ENCODE measurements at regions of chr6 and their contacts with region 1.

Region 1: GRCh38 chr6:33744001-33744848 is 2.5 kb downstream of the IP6K3 start:
- DNase-seq: peak; percentile 81
- ATAC-seq: peak; percentile 81
- H3K4me3 ChIP-seq: no peak overlapping the region
- H3K4me3 Mint-ChIP-seq: no peak overlapping the region
- H3K27ac ChIP-seq: no peak overlapping the region
- H3K27ac Mint-ChIP-seq: peak overlapping the region; percentile 23
- H3K4me1 ChIP-seq: peaks cover 0 to 3% of the 10 kb centered on the region in 2 donors
- H3K4me1 Mint-ChIP-seq: peaks cover 3% of the 10 kb centered on the region
- H3K27me3 ChIP-seq: peaks cover 0 to 9% (median under 1%) of the 10 kb centered on the region in 4 experiments
- H3K27me3 Mint-ChIP-seq: peaks cover 24% of the 10 kb centered on the region
- CTCF ChIP-seq: peak; percentile 86

Region 2: GRCh38 chr6:33592411-33593054 is 151.7 kb before region 1 on chr6:
- CTCF ChIA-PET with region 1: interaction called, 11 read pairs
- POLR2A ChIA-PET with region 1: no interaction called
- intact Hi-C with region 1: loop called (anchors 1 kb)
- DNase-seq: peak; percentile 91
- ATAC-seq: peak; percentile 50
- H3K4me3 ChIP-seq: peak overlapping the region in 4 of 5 experiments; percentile 38 to 67 (median 42)
- H3K4me3 Mint-ChIP-seq: peak overlapping the region; percentile 81
- H3K27ac ChIP-seq: peak overlapping the region; percentile 94 to 100
- H3K27ac Mint-ChIP-seq: peak overlapping the region; percentile 100
- H3K4me1 ChIP-seq: peaks cover 50 to 61% of the 10 kb centered on the region in 2 donors
- H3K4me1 Mint-ChIP-seq: peaks cover 68% of the 10 kb centered on the region
- H3K27me3 ChIP-seq: no peaks in the 10 kb centered on the region
- H3K27me3 Mint-ChIP-seq: no peaks in the 10 kb centered on the region
- CTCF ChIP-seq: no peak

Region 3: DNA sequence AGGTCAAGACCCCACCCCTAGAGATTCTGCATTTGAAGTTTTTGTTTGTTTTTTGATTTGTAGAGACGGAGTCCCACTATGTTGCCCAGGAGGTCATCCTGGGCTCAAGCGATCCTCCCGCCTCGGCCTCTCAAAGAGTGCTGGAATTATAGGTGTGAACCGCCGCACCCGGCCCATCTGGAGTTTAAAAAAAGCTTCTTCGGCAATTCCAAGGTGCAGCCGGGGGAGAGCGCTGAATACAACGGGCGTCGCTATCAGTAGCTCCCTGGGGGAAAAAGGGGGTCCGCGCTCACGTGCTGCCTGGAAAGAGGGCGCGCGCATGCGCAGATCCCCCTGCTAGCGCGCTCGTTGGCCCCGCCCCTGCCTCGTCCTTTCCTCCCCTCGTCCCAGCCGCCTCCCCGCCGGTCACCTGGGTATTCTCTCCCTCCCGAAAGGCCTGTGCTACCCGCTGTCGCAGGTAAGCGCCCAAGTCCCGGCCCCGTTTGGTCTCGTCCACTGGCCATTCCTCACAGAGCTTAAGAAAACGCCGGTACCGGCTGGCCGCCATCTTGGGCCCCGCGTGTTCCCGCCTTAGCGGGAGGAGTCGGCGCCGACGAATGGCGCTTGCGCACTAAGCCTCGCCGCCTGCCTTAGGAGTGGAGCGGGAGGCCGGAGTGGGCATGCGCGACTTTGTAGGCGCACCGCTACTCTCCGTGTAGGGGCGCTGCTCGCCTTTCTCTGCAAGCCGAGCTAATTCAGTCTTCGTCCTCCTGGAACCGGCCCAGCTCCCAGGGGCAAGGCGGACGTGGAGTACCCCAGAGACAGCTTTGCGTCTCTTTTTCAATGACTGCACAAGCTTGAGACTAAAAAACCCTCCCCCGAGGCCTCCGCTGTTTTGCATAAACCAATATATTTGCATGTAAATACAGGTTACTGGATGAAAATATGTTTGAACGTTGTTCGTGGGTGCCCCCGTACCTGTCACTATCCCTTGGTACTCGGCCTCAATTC is 32.8 kb before region 1 on chr6 and contains the start of gene UQCC2:
- CTCF ChIA-PET with region 1: interaction called, 27 read pairs
- POLR2A ChIA-PET with region 1: no interaction called
- intact Hi-C with region 1: loop called (anchors 1 kb)
- DNase-seq: peak; percentile 99
- ATAC-seq: peak; percentile 87
- H3K4me3 ChIP-seq: peak within 1 kb of the TSS; percentile 62 to 96 (median 93)
- H3K4me3 Mint-ChIP-seq: peak within 1 kb of the TSS; percentile 87
- H3K27ac ChIP-seq: peak within 1 kb of the TSS; percentile 83 to 88
- H3K27ac Mint-ChIP-seq: peak within 1 kb of the TSS; percentile 93
- H3K4me1 ChIP-seq: peaks cover 16 to 28% of the 10 kb centered on the region in 2 donors
- H3K4me1 Mint-ChIP-seq: peaks cover 33% of the 10 kb centered on the region
- H3K27me3 ChIP-seq: no peaks in the 10 kb centered on the region
- H3K27me3 Mint-ChIP-seq: no peaks in the 10 kb centered on the region
- CTCF ChIP-seq: peak; percentile 44
- total RNA-seq, gene UQCC2: 16.6 and 17.1 TPM in 2 replicates

Region 4: DNA sequence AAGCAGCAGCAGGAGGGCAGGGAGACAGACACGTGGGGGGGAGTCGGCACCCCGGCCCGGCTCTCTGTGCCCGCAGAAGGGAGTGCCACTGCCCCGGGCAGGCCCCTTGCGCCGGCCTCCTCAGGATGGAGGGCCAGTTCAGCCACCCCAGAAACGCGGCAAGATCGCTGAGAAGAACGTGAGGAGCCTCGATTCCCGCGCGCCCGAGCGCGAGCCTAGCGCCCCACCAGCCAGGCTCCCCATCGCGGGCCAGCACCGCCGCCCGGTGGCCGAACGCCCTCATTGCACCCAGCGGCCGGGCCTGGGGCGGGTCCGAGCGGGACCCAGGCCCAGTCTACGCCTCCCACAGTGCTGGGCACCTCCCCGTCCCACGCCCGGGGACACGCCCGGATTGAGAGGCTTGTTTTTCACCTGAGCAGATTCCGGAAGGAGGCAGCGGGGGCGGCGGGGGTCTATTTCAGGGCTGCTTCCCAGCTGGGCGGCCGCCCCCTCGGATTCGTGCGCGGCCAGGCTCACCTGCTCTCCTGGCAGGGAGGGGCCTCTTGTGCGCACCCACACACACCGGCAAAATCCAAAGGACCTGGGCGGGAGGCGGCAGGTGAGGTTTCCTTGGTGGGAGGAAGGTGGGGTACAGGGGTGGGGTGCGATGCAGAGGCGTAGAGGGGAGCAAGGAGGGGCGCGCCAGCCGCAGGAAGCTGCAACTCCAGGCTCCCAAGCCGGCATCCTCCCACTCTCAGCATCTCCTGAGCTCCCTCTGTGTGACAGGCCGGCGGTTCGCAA is 410.6 kb after region 1 on chr6:
- CTCF ChIA-PET with region 1: interaction called, 12 read pairs
- POLR2A ChIA-PET with region 1: no interaction called
- intact Hi-C with region 1: loop called (anchors 1 kb)
- DNase-seq: peak; percentile 76
- ATAC-seq: peak; percentile 94
- H3K4me3 ChIP-seq: peak overlapping the region in 3 of 5 experiments; percentile 33 to 39 (median 36)
- H3K4me3 Mint-ChIP-seq: peak overlapping the region; percentile 55
- H3K27ac ChIP-seq: no peak overlapping the region
- H3K27ac Mint-ChIP-seq: no peak overlapping the region
- H3K4me1 ChIP-seq: peaks cover 14 to 21% of the 10 kb centered on the region in 2 donors
- H3K4me1 Mint-ChIP-seq: peaks cover 16% of the 10 kb centered on the region
- H3K27me3 ChIP-seq: peaks cover 0 to 46% (median 18%) of the 10 kb centered on the region in 4 experiments
- H3K27me3 Mint-ChIP-seq: peaks cover 42% of the 10 kb centered on the region
- CTCF ChIP-seq: peak; percentile 99